CD8-positive, alpha-beta T cell (primary cell): ENCODE measurements at regions of chr17 and their contacts with region 1.

Region 1: GRCh38 chr17:4939796-4940624 is at the starts of genes RNF167 and SLC25A11:
- DNase-seq: peak; percentile 90 to 100 (median 95)
- ATAC-seq: peak; percentile 87
- H3K4me3 ChIP-seq: peak within 1 kb of the TSS; percentile 95 to 96
- H3K4me3 Mint-ChIP-seq: peak within 1 kb of the TSS; percentile 92
- H3K27ac ChIP-seq: peak within 1 kb of the TSS; percentile 83 to 92
- H3K27ac Mint-ChIP-seq: peak within 1 kb of the TSS; percentile 95
- H3K4me1 ChIP-seq: peaks cover 54% of the 10 kb centered on the region
- H3K4me1 Mint-ChIP-seq: peaks cover 60% of the 10 kb centered on the region
- H3K27me3 ChIP-seq: no peaks in the 10 kb centered on the region
- H3K27me3 Mint-ChIP-seq: no peaks in the 10 kb centered on the region
- CTCF ChIP-seq: no peak
- total RNA-seq, gene RNF167: 49.3 to 52.2 TPM
- total RNA-seq, gene SLC25A11: 15.8 to 16.3 TPM

Region 2: GRCh38 chr17:4272213-4272971 is 667.6 kb before region 1 on chr17:
- CTCF ChIA-PET with region 1: no interaction called
- POLR2A ChIA-PET with region 1: no interaction called
- intact Hi-C with region 1: no loop called
- DNase-seq: no peak
- ATAC-seq: no peak
- H3K4me3 ChIP-seq: no peak overlapping the region
- H3K4me3 Mint-ChIP-seq: no peak overlapping the region
- H3K27ac ChIP-seq: no peak overlapping the region
- H3K27ac Mint-ChIP-seq: peak overlapping the region; percentile 23
- H3K4me1 ChIP-seq: no peaks in the 10 kb centered on the region
- H3K4me1 Mint-ChIP-seq: peaks cover 3% of the 10 kb centered on the region
- H3K27me3 ChIP-seq: no peaks in the 10 kb centered on the region
- H3K27me3 Mint-ChIP-seq: no peaks in the 10 kb centered on the region
- CTCF ChIP-seq: no peak

Region 3: DNA sequence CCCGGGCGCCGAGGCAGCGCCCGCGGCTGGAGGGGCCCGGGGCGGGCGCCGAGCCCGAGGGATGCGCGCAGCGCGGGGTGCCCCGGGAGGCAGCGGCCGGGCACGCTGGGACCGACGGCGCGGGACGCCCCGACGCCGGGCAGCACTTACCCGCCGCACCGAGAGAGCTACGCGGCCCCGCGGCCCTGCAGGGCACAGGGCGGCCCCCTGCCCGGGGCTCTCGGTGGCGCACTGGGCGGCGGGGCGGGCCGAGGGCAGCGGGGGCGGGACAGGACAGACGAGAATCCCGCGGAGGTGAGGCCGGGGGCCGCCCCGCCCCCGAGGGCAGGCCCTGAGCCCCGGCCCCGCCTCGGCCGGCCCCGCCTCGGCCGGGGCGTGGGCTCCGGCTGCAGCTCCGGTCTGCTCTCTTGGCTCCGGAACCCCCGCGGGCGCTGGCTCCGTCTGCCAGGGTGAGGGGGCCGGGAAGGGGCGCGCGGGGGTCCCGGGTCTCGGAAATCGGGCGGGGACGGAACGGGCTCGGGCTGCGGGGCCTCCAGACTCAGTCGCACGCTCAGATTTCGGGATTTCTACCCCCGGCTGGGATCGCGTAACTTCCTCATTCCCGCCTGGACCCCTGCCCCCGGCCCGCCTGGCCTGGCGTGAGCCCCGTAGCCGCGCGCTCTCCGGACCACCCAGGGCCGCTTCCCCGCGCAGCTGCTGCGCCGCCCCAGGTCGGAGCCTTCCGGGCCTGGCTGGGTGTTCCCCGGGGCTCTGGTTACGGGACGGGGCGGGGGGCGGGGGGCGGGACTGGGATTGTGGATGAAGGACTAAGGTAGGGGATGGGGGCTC is 133.0 kb before region 1 on chr17 and contains the start of gene PLD2:
- CTCF ChIA-PET with region 1: no interaction called
- POLR2A ChIA-PET with region 1: no interaction called
- intact Hi-C with region 1: no loop called
- DNase-seq: peak; percentile 60 to 93 (median 85)
- ATAC-seq: peak; percentile 98
- H3K4me3 ChIP-seq: peak within 1 kb of the TSS; percentile 56 to 58
- H3K4me3 Mint-ChIP-seq: peak within 1 kb of the TSS; percentile 81
- H3K27ac ChIP-seq: peak within 1 kb of the TSS in 1 of 2 experiments; percentile 39
- H3K27ac Mint-ChIP-seq: no peak within 1 kb of the TSS
- H3K4me1 ChIP-seq: peaks cover 11% of the 10 kb centered on the region
- H3K4me1 Mint-ChIP-seq: peaks cover 19% of the 10 kb centered on the region
- H3K27me3 ChIP-seq: no peaks in the 10 kb centered on the region
- H3K27me3 Mint-ChIP-seq: no peaks in the 10 kb centered on the region
- CTCF ChIP-seq: no peak
- total RNA-seq, gene PLD2: 14.3 to 15.7 TPM

Region 4: DNA sequence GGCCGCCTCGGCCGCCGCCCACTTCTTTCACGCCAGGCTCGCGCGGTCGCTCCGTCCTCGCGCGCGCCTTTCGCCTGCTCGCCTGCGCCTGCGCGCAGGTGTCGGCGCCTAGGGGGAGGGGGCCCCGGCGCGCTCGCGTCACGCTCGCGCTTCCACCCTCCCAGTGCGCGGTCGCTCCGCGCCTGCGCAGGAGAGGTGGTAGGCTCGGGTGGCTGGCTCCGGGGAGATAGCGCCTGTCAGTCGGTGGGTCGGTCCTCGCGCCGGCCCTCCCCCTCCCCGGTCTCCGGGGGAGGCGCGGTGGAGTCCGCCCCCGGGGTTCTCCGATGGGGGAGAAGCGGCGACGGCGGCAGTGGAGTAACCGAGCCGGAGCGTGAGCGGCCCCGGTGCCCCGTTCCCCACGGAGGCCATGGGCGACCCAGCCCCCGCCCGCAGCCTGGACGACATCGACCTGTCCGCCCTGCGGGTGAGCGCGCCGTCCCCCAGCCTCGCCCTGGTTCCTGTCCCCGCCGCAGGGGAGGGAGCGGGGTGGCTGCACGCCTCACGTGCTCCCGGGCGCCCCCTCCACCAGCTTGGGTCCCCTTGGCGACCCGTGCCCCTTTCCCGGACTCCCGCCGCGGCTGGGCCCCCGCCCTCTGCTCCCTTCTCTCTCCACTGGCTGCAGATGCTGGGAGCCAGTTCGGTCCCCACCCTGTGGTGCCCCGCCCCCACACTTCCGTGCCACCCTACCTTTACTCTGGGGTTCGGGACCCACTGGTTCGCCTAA is 106.7 kb before region 1 on chr17 and contains the start of gene MINK1:
- CTCF ChIA-PET with region 1: no interaction called
- POLR2A ChIA-PET with region 1: no interaction called
- intact Hi-C with region 1: loop called in 1 of 2 experiments (anchors 1 kb)
- DNase-seq: peak; percentile 75 to 98 (median 88)
- ATAC-seq: peak; percentile 93
- H3K4me3 ChIP-seq: peak within 1 kb of the TSS; percentile 75 to 77
- H3K4me3 Mint-ChIP-seq: peak within 1 kb of the TSS; percentile 91
- H3K27ac ChIP-seq: peak within 1 kb of the TSS; percentile 73 to 80
- H3K27ac Mint-ChIP-seq: peak within 1 kb of the TSS; percentile 90
- H3K4me1 ChIP-seq: peaks cover 26% of the 10 kb centered on the region
- H3K4me1 Mint-ChIP-seq: peaks cover 39% of the 10 kb centered on the region
- H3K27me3 ChIP-seq: no peaks in the 10 kb centered on the region
- H3K27me3 Mint-ChIP-seq: peaks cover 6% of the 10 kb centered on the region
- CTCF ChIP-seq: no peak
- total RNA-seq, gene MINK1: 85.9 to 86.0 TPM

Region 5: GRCh38 chr17:4908301-4908700 is 31.7 kb before region 1 on chr17:
- CTCF ChIA-PET with region 1: interaction called, 11 read pairs
- POLR2A ChIA-PET with region 1: interaction called, 4 read pairs
- intact Hi-C with region 1: loop called (anchors 1 to 2 kb)
- DNase-seq: peak in 1 of 9 experiments; percentile 29
- ATAC-seq: no peak
- H3K4me3 ChIP-seq: no peak overlapping the region
- H3K4me3 Mint-ChIP-seq: no peak overlapping the region
- H3K27ac ChIP-seq: no peak overlapping the region
- H3K27ac Mint-ChIP-seq: no peak overlapping the region
- H3K4me1 ChIP-seq: peaks cover 22% of the 10 kb centered on the region
- H3K4me1 Mint-ChIP-seq: peaks cover 7% of the 10 kb centered on the region
- H3K27me3 ChIP-seq: no peaks in the 10 kb centered on the region
- H3K27me3 Mint-ChIP-seq: no peaks in the 10 kb centered on the region
- CTCF ChIP-seq: no peak

Region 6: GRCh38 chr17:4986951-4987766 is 47.1 kb after region 1 on chr17 and contains the start of gene CAMTA2:
- CTCF ChIA-PET with region 1: interaction called, 6 read pairs
- POLR2A ChIA-PET with region 1: interaction called, 13 read pairs
- intact Hi-C with region 1: loop called (anchors 1 kb)
- DNase-seq: peak; percentile 69 to 92 (median 91)
- ATAC-seq: peak; percentile 91
- H3K4me3 ChIP-seq: peak within 1 kb of the TSS; percentile 98 to 100
- H3K4me3 Mint-ChIP-seq: peak within 1 kb of the TSS; percentile 91
- H3K27ac ChIP-seq: peak within 1 kb of the TSS; percentile 80 to 98
- H3K27ac Mint-ChIP-seq: peak within 1 kb of the TSS; percentile 95
- H3K4me1 ChIP-seq: peaks cover 27% of the 10 kb centered on the region
- H3K4me1 Mint-ChIP-seq: peaks cover 38% of the 10 kb centered on the region
- H3K27me3 ChIP-seq: no peaks in the 10 kb centered on the region
- H3K27me3 Mint-ChIP-seq: no peaks in the 10 kb centered on the region
- CTCF ChIP-seq: peak; percentile 76
- total RNA-seq, gene CAMTA2: 40.1 to 42.3 TPM